Activated CD4-positive, alpha-beta T cell treated with anti-CD3 and anti-CD28 coated beads for 36 hours (primary cell): ENCODE measurements at regions of chr12 and their contacts with region 1.

Region 1: DNA sequence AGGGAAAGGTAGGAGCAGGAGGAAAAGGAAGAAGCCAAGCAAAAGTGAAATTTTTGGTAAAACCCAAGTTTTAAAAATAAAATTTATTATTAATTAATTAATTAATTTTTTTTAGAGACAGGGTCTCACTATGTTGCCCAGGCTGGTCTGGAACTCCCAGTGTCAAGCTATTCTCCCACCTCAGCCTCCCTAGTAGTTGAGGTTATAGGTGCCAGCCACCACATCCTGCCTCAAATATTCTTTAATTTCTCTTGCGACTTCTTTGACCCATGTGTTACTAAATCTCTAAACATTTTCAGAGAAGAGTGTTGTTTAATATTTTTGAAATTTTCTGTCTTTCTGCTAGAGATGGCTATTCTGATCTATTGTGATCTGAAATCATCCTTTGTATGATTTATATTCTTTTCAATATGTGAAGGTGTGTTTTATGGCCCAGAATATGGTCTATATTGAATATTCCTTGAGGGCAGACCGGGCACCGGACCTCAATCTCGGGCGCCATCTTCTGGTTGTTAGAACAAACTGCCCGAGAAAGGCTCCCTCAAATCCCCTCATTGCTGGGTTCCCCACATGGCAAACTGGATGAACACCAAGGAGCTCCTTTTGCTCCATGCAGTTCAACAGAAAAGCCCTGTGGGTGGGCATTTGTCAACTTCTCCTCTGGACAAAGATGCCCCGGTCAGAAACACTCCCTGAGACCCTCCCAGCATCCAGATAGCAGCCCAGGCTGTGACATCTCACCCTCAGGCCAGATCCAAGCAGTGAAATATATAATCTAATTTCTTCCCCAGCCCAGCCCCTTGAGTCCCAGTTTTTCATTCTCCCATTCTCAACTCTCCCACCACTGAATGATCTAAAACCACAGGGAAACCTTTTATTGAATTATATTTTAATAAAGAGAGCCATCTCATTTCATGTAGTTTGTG is 110.5 kb downstream of the ASCL4 start:
- DNase-seq: peak; percentile 71
- ATAC-seq: peak; percentile 76
- H3K4me3 Mint-ChIP-seq: no peak overlapping the region
- H3K27ac Mint-ChIP-seq: no peak overlapping the region
- H3K4me1 Mint-ChIP-seq: no peaks in the 10 kb centered on the region
- H3K27me3 Mint-ChIP-seq: peaks cover 4% of the 10 kb centered on the region

Region 2: DNA sequence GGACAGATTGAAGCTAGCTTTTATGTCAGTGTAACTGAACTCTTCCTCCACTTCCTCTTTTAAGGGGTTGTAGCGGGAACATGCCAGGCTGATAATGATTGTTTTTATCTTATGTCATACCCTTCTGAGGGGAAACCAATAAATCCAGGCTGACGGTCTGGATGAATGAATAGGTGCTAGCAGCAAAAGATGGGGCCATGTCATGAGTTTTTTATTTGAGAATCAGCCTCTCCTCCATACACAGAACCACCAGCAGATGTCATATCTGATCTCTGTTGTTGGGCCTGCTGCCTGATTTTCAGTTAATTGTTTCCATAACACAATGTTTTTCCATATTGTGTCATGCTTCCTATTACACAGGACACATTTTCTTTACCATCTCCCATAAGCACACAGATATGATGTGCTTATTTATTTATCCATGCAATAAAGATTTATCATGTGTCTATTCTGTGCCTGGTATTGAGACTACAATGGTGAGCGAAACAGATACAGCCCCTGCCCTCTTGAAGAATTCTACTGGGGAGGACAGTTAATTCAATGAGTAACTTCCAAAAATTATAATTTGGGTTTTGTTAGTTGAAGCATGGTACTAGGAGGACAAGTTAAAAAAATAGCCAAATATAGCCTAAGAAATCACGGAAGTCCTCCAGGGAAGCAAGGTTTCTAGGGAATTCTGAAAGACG is 758.1 kb before region 1 on chr12:
- CTCF ChIA-PET with region 1: no interaction called
- POLR2A ChIA-PET with region 1: no interaction called
- intact Hi-C with region 1: loop called (anchors 10 kb)
- DNase-seq: no peak
- ATAC-seq: peak; percentile 33
- H3K4me3 Mint-ChIP-seq: no peak overlapping the region
- H3K27ac Mint-ChIP-seq: no peak overlapping the region
- H3K4me1 Mint-ChIP-seq: no peaks in the 10 kb centered on the region
- H3K27me3 Mint-ChIP-seq: peaks cover 9% of the 10 kb centered on the region

Region 3: GRCh38 chr12:107468182-107468581 is 416.9 kb before region 1 on chr12:
- CTCF ChIA-PET with region 1: no interaction called
- POLR2A ChIA-PET with region 1: no interaction called
- intact Hi-C with region 1: no loop called
- DNase-seq: no peak
- ATAC-seq: no peak
- H3K4me3 Mint-ChIP-seq: no peak overlapping the region
- H3K27ac Mint-ChIP-seq: no peak overlapping the region
- H3K4me1 Mint-ChIP-seq: peaks cover 11% of the 10 kb centered on the region
- H3K27me3 Mint-ChIP-seq: no peaks in the 10 kb centered on the region

Region 4: GRCh38 chr12:107670999-107671643 is 213.9 kb before region 1 on chr12:
- CTCF ChIA-PET with region 1: interaction called, 5 read pairs
- POLR2A ChIA-PET with region 1: no interaction called
- intact Hi-C with region 1: loop called (anchors 1 kb)
- DNase-seq: peak; percentile 73
- ATAC-seq: peak; percentile 79
- H3K4me3 Mint-ChIP-seq: peak overlapping the region; percentile 37
- H3K27ac Mint-ChIP-seq: no peak overlapping the region
- H3K4me1 Mint-ChIP-seq: peaks cover 4% of the 10 kb centered on the region
- H3K27me3 Mint-ChIP-seq: peaks cover 7% of the 10 kb centered on the region

Region 5: GRCh38 chr12:107955966-107956643 is 71.1 kb after region 1 on chr12:
- CTCF ChIA-PET with region 1: no interaction called
- POLR2A ChIA-PET with region 1: no interaction called
- intact Hi-C with region 1: no loop called
- DNase-seq: no peak
- ATAC-seq: no peak
- H3K4me3 Mint-ChIP-seq: no peak overlapping the region
- H3K27ac Mint-ChIP-seq: no peak overlapping the region
- H3K4me1 Mint-ChIP-seq: no peaks in the 10 kb centered on the region
- H3K27me3 Mint-ChIP-seq: peaks cover 15% of the 10 kb centered on the region

Region 6: GRCh38 chr12:108129017-108129812 is 244.2 kb after region 1 on chr12 and contains the start of gene WSCD2:
- CTCF ChIA-PET with region 1: no interaction called
- POLR2A ChIA-PET with region 1: no interaction called
- intact Hi-C with region 1: no loop called
- DNase-seq: peak; percentile 37
- ATAC-seq: no peak
- H3K4me3 Mint-ChIP-seq: no peak within 1 kb of the TSS
- H3K27ac Mint-ChIP-seq: no peak within 1 kb of the TSS
- H3K4me1 Mint-ChIP-seq: peaks cover 3% of the 10 kb centered on the region
- H3K27me3 Mint-ChIP-seq: peaks cover 48% of the 10 kb centered on the region
- total RNA-seq, gene WSCD2: not detected